Gastrocnemius medialis (tissue), 4 donors: ENCODE measurements at regions of chr3 and their contacts with region 1.

Region 1: DNA sequence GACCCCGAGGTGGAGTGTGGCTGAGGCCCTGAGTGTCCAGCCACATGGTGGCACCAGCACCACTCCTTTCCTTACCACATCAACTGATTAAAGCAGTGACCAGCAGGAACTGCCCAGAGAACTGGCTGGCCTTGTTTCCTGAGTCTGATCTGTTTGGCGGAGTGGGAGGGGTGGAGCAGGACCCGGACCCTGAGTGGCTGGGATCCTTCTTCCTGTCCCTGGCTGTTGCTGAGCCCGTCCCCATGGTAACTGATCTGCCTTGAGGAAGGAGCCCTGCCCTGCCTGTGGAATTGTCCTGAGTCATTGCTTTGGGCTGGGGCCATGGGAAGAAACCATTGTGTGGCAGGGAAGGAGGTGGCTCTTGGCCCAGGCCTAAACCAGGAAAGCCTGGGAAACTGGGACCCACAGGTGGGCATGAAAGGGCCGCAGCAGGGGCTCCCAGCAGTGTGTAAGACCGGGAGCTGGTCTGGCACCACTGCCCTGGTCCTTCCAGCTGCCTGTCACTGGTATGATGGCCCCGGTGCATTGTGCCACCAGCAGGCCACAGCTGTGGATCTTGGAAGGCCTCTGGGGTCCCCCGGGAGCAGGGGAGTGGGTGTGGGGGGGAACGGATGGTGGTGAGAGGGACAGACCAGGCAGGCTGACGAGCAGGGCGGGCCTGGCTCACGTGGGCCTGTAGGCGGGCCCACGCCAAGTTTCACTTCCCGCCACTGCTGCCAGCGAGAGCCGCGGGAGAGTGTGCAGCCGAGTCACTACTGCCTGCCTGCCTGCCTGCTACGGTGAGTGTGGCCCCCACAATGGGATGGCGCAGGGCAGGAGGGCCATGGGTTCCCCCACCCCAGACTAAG is 19.2 kb downstream of the ATRIP start:
- DNase-seq: peak; percentile 99
- ATAC-seq: peak; percentile 92 to 96
- H3K4me3 ChIP-seq: peak overlapping the region; percentile 56 to 76 (median 70)
- H3K27ac ChIP-seq: peak overlapping the region; percentile 99 to 100 (median 100)
- H3K4me1 ChIP-seq: peaks cover 39 to 40% of the 10 kb centered on the region in 2 donors
- H3K27me3 ChIP-seq: no peaks in the 10 kb centered on the region
- CTCF ChIP-seq: peak in 4 of 5 experiments; percentile 81 to 88 (median 86)
- POLR2A ChIP-seq: peak; percentile 77 to 83

Region 2: DNA sequence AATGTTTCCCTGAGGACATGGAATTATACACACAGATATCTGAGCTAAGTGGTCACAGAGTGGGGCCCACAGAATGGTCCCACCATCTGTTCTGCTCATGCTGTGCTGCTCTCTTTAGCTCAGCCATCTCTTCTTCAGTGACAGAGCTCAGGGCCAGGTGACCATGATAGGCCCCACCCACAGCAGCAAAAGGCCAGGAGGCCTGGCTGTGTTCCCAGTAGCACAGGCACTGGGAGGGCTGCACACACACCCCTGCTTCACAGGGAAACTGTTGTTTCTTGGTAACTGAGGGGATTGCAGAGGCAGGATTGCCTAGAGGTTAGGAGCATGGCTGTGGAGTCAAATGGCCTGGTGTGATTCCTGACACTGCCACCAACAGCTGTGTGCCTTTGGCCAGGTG is 98.6 kb before region 1 on chr3:
- in situ Hi-C with region 1: no loop called
- intact Hi-C with region 1: no loop called
- DNase-seq: no peak
- ATAC-seq: no peak
- H3K4me3 ChIP-seq: no peak overlapping the region
- H3K27ac ChIP-seq: no peak overlapping the region
- H3K4me1 ChIP-seq: no peaks in the 10 kb centered on the region
- H3K27me3 ChIP-seq: no peaks in the 10 kb centered on the region
- CTCF ChIP-seq: no peak
- POLR2A ChIP-seq: no peak

Region 3: DNA sequence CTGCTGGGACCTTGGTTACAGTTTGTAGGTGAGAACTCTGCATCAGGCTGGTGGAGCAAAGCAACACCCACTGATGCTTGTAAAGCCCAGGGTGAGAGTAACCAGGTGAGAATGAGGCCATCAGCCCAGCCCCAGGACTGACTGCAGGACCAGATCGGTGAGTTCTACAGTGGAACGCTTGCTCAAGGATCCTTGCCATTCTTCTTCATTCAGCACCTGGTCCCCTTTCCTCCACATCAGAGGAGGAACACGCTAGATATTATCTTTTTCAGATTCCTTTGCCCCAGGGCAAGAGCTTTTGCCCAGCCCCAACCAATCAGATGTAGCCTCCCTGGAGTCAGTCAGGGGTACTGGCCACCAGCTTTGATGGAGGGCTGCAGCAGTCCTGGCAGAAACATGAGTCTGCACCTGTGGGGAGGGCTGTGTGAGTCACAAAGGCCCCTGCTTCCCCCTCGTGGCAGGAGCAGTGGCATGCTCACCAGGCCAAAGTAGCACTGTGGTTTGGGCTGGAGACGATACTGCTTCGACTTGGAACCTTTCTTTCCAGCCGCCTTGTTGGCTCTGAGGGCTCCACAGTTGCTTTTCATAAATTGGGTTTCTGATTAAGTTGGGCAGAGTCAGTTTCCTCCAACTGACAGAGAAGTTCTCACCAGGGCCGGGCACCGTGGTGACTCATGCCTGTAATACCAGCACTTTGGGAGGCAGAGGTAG is 41.8 kb after region 1 on chr3:
- in situ Hi-C with region 1: no loop called
- intact Hi-C with region 1: loop called (anchors 1 kb)
- DNase-seq: peak; percentile 25 to 62
- ATAC-seq: peak in 1 of 2 donors; percentile 58
- H3K4me3 ChIP-seq: no peak overlapping the region
- H3K27ac ChIP-seq: peak overlapping the region; percentile 55 to 71 (median 62)
- H3K4me1 ChIP-seq: peaks cover 22 to 24% of the 10 kb centered on the region in 2 donors
- H3K27me3 ChIP-seq: no peaks in the 10 kb centered on the region
- CTCF ChIP-seq: peak; percentile 30 to 69 (median 55)
- POLR2A ChIP-seq: no peak

Region 4: DNA sequence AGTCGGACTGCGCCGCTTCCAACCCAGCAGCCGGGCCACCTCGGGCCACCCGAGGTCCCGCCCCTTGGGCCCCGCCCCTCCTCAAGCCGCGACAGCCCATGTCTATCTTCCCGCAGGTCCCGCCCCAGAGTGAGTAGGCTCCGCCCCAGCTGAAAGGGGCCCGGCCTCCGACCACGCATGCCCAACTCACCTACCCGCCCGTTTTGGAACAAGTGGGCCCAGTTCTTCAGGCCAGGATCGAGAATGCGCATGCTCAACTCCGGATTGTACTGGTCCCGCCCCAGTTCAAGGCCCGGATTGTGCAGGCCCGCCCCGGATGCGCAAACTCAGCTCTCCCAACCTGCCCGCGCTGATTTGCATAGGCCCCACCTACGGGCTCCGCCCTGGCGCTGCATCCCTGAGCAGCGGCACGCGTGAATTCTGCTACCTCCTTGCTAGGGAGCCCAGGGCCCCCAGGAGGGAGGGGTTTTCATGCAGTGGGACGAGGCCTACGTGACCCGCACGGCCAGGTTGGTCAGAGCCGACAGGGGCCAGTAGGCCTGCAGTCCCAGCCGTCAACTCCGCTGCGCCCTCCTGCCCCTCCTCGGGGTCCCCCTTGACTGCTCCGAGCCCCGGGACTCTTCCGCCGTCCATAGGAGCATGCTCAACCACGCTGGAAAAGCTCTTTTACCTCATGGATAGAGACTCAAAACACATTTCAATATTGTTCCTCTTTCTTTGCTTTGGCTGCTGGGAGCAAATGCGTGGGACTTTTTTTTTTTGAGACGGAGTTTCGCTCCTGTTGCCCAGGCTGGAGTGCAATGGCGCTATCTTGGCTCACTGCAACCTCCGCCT is 91.3 kb after region 1 on chr3 and contains the start of gene PFKFB4:
- in situ Hi-C with region 1: loop called in 1 of 4 experiments (anchors 5 kb)
- intact Hi-C with region 1: no loop called
- DNase-seq: peak; percentile 99 to 100
- ATAC-seq: peak; percentile 93
- H3K4me3 ChIP-seq: peak within 1 kb of the TSS; percentile 49 to 71 (median 63)
- H3K27ac ChIP-seq: peak within 1 kb of the TSS; percentile 59 to 85 (median 72)
- H3K4me1 ChIP-seq: peaks cover 35 to 40% of the 10 kb centered on the region in 2 donors
- H3K27me3 ChIP-seq: no peaks in the 10 kb centered on the region
- CTCF ChIP-seq: peak in 2 of 5 experiments; percentile 17 to 24
- POLR2A ChIP-seq: no peak
- total RNA-seq, gene PFKFB4: 0.87 to 2.6 (median 1.7) TPM

Region 5: DNA sequence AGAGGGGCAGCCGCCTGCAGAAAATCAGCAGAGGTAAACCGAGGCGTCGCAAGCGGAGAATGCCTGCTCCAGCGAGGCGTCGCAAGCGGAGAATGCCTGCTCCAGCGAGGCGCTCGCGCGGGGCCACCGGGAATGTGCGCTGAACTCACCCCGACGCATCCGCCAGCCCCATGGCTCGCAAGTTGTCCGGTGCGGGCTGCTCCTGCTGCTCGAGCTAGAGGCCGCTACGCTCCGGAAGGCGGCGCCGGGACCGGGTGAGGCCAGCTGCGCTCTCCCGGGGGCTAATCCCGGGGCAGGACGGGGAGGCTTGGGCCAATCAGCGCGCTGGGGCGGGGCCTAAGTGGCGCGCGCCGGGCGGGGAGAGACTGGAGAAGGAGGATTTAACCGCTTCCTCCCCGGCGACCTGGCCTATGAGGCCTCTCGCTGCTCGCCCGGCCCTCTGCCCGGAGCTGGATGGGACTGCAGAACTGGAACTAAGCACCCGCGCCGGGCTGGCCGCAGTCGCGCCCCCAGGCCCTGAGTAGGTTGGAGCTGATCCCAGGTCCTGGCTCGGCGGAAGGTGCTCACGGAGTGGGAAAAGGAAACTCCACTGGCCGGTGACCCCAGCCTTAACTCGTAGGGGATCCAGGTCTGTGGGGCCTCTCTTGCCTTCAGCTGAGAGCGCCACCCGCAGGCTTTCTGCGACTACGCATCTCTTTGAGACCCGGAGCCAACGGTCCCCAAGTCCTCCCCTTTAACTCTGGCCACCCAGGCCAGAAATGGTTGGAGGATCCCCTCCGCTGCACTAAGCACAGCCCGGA is 169.7 kb after region 1 on chr3 and contains the start of gene SLC26A6:
- in situ Hi-C with region 1: no loop called
- intact Hi-C with region 1: loop called (anchors 1 kb)
- DNase-seq: peak; percentile 94 to 95
- ATAC-seq: peak; percentile 93 to 94
- H3K4me3 ChIP-seq: peak within 1 kb of the TSS; percentile 60 to 97 (median 84)
- H3K27ac ChIP-seq: peak within 1 kb of the TSS; percentile 84 to 92 (median 90)
- H3K4me1 ChIP-seq: peaks cover 16 to 24% of the 10 kb centered on the region in 2 donors
- H3K27me3 ChIP-seq: no peaks in the 10 kb centered on the region
- CTCF ChIP-seq: peak in 4 of 5 experiments; percentile 30 to 59 (median 53)
- POLR2A ChIP-seq: peak; percentile 51 to 68
- total RNA-seq, gene SLC26A6: 6.1 to 17.3 (median 10.1) TPM